SK-N-SH (cell line): ENCODE measurements at regions of chr10 and their contacts with region 1.

Region 1: GRCh38 chr10:64271983-64272382 is 750.8 kb downstream of the REEP3 start:
- DNase-seq: no peak
- H3K4me3 ChIP-seq: no peak overlapping the region
- H3K27ac ChIP-seq: no peak overlapping the region
- H3K4me1 ChIP-seq: no peaks in the 10 kb centered on the region
- H3K27me3 ChIP-seq: no peaks in the 10 kb centered on the region
- CTCF ChIP-seq: peak; percentile 36
- EP300 ChIP-seq: no peak
- RAD21 ChIP-seq: no peak; the same call in 1 of the 2 replicates

Region 2: GRCh38 chr10:64257704-64258103 is 14.3 kb before region 1 on chr10:
- CTCF ChIA-PET with region 1: interaction called, 11 read pairs
- POLR2A ChIA-PET with region 1: no interaction called
- DNase-seq: no peak
- H3K4me3 ChIP-seq: no peak overlapping the region
- H3K27ac ChIP-seq: no peak overlapping the region
- H3K4me1 ChIP-seq: no peaks in the 10 kb centered on the region
- H3K27me3 ChIP-seq: no peaks in the 10 kb centered on the region
- CTCF ChIP-seq: no peak
- EP300 ChIP-seq: no peak
- RAD21 ChIP-seq: no peak

Region 3: DNA sequence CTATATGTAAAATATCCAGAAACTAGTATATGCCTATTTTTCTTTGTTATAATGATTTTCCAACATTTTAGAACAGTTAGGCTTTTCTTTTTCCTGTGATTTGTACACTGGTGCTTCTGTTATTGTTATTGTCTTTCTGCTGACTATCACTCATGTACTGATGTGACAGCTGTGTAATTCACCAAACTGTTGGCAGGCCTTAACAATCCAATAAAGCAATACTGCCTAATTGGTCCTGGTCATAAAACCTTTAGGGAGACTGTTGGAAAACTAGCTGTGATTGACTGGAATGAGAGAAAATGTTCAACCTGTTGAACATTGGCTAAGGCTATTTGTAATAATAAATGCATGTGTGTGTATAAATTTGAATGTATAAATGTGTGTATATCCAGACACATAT is 205.8 kb after region 1 on chr10:
- CTCF ChIA-PET with region 1: no interaction called
- POLR2A ChIA-PET with region 1: no interaction called
- DNase-seq: no peak
- H3K4me3 ChIP-seq: no peak overlapping the region
- H3K27ac ChIP-seq: no peak overlapping the region
- H3K4me1 ChIP-seq: no peaks in the 10 kb centered on the region; a peak in 1 of 4 replicates
- H3K27me3 ChIP-seq: no peaks in the 10 kb centered on the region
- CTCF ChIP-seq: no peak
- EP300 ChIP-seq: no peak
- RAD21 ChIP-seq: no peak